ENCODE measurements at regions of chr18 and their contacts with region 1.

Region 1: GRCh38 chr18:5515011-5515784 is 28.6 kb downstream of the EPB41L3 start:
- DNase-seq: no peak
- H3K4me3 ChIP-seq: no peak overlapping the region
- H3K27ac ChIP-seq: no peak overlapping the region
- H3K4me1 ChIP-seq: peaks cover 49% of the 10 kb centered on the region
- H3K27me3 ChIP-seq: no peaks in the 10 kb centered on the region
- CTCF ChIP-seq: no peak
- POLR2A ChIP-seq: no peak

Region 2: GRCh38 chr18:5463379-5463778 is 51.8 kb before region 1 on chr18:
- CTCF ChIA-PET with region 1: interaction called, 4 read pairs
- POLR2A ChIA-PET with region 1: no interaction called
- dilution Hi-C with region 1: no loop called
- intact Hi-C with region 1: loop called (anchors 2 kb)
- DNase-seq: no peak
- H3K4me3 ChIP-seq: no peak overlapping the region
- H3K27ac ChIP-seq: no peak overlapping the region
- H3K4me1 ChIP-seq: peaks cover 36% of the 10 kb centered on the region
- H3K27me3 ChIP-seq: no peaks in the 10 kb centered on the region
- CTCF ChIP-seq: no peak
- POLR2A ChIP-seq: no peak

Region 3: GRCh38 chr18:5527603-5528002 is 12.4 kb after region 1 on chr18:
- CTCF ChIA-PET with region 1: interaction called, 20 read pairs
- POLR2A ChIA-PET with region 1: no interaction called
- dilution Hi-C with region 1: no loop called
- intact Hi-C with region 1: no loop called
- DNase-seq: peak; percentile 46
- H3K4me3 ChIP-seq: no peak overlapping the region
- H3K27ac ChIP-seq: no peak overlapping the region
- H3K4me1 ChIP-seq: peaks cover 3% of the 10 kb centered on the region
- H3K27me3 ChIP-seq: no peaks in the 10 kb centered on the region
- CTCF ChIP-seq: no peak
- POLR2A ChIP-seq: no peak

Region 4: GRCh38 chr18:5538544-5538943 is 23.3 kb after region 1 on chr18:
- CTCF ChIA-PET with region 1: interaction called, 20 read pairs
- POLR2A ChIA-PET with region 1: no interaction called
- dilution Hi-C with region 1: no loop called
- intact Hi-C with region 1: loop called (anchors 2 kb)
- DNase-seq: no peak
- H3K4me3 ChIP-seq: no peak overlapping the region
- H3K27ac ChIP-seq: no peak overlapping the region
- H3K4me1 ChIP-seq: peaks cover 22% of the 10 kb centered on the region
- H3K27me3 ChIP-seq: no peaks in the 10 kb centered on the region
- CTCF ChIP-seq: no peak
- POLR2A ChIP-seq: no peak

Measured in endothelial cell of umbilical vein (primary cell).